ENCODE measurements at regions of chr11 and their contacts with region 1.

Region 1: DNA sequence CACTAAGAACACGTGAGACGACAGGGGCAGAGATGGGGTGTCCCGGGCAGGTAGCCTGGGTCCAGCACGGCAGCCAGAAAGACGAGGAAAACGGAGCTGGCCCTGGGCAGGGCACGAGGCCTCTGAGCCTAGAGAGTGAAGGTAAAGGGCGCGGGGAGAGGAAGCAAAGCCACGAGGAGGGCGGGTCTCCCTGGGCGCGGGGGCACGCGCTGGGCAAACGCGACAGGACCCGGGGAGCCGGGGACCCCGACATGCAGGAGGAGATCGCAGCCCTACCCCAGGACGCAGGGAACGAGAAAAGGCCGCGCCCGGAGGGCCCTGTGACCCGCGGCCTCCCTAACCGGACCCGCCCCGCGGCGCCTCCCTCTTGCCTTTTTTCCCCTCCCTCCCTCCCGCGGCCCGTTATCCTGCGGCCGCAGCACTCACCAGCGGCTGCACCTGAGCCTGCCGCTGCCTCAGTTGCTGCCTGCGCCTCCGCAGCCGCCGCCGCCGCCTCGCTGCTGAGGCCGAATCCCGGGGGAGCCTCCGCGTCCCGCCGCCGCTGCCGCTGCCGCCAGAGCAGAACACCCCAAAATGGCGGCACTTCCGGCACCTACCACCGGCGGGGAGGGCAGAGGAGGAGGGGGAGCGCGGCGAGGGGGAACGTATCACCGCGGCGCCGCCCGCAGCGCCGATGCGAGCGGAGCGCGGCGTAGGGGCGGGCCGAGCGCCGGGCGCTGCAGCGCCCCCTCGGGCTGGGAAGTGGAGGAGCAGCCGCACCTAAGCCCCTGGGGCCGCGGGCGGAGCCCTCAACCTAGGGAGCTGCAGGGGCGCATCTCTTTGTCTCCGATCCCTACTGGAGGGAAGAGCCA is at the start of gene CELF1:
- DNase-seq: peak; percentile 95
- H3K4me3 ChIP-seq: peak within 1 kb of the TSS; percentile 63 to 88
- H3K27ac ChIP-seq: peak within 1 kb of the TSS; percentile 84 to 87
- H3K4me1 ChIP-seq: peaks cover 3 to 24% of the 10 kb centered on the region in 2 experiments; a peak in 2 of 4 replicates
- H3K27me3 ChIP-seq: no peaks in the 10 kb centered on the region
- CTCF ChIP-seq: peak; percentile 81
- EP300 ChIP-seq: 0 out of 4 replicates have a peak, but pooled peaks of 1 of the 2 experiments have one; percentile 3
- RAD21 ChIP-seq: peak; percentile 24; the same call in 1 of the 2 replicates
- polyA plus RNA-seq, gene CELF1: 47.5 and 69.3 TPM in 2 replicates

Region 2: DNA sequence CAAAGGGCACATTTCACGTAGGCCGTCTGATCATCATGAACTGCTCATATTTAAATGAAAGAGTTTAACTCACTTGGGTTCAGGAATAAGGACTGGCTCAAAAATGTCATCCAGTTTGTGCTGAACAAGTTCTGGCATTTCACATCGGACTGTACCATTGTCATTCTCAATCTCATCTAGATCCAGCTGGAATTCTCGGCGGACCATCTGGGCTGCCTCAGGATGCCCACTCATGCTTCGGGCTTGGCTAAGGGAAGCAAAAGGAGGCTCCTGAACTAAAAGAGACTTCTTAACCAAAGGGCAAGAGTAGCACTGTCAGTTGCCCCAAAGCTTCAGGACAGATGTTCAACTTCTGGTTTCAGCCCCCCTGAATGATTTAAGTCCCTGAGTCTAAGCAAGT is 793.6 kb before region 1 on chr11:
- CTCF ChIA-PET with region 1: no interaction called
- POLR2A ChIA-PET with region 1: no interaction called
- DNase-seq: no peak
- H3K4me3 ChIP-seq: no peak overlapping the region
- H3K27ac ChIP-seq: no peak overlapping the region
- H3K4me1 ChIP-seq: no peaks in the 10 kb centered on the region
- H3K27me3 ChIP-seq: no peaks in the 10 kb centered on the region
- CTCF ChIP-seq: no peak
- EP300 ChIP-seq: no peak
- RAD21 ChIP-seq: no peak

Region 3: DNA sequence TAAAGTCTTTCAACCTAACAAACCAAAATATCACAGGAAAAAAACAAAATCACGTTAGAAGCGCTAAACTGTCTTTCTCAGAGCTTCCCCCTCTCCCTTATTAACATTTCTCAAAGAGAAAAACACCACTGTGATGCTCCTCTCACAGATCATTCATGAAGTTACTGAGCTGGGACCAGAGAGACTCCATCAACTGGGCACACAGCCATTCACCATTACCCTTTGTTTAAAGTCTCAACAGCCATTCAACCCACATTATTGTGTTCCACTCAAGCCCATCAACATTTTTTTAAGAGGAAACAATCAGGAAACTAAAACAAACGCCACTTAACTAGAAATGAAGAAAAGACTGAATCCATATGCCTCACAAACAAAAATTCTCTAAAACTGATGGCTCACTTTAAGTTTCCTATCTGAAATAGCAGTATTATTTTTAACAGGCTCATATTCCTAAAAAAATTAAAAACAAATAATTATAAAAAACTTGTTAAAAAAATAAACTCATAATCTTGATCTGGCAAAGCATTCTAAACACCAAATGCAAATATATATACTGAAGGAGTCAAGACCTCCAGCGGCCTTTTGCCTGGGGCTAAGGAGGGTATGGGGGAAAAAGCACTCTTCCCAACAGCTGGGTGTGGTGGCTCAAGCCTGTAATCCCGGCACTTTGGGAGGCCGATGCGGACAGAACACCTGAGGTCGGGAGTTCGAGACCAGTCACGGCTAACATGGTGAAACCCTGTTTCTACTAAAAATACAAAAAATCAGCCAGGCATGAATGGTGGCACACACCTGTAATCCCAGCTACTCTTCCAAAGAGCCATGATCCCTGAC is 13.8 kb before region 1 on chr11:
- CTCF ChIA-PET with region 1: interaction called, 10 read pairs
- POLR2A ChIA-PET with region 1: interaction called, 3 read pairs
- DNase-seq: no peak
- H3K4me3 ChIP-seq: no peak overlapping the region
- H3K27ac ChIP-seq: peak overlapping the region in 1 of 2 experiments; percentile 70; a peak in 2 of 4 replicates
- H3K4me1 ChIP-seq: peaks cover 0 to 66% of the 10 kb centered on the region in 2 experiments; a peak in 3 of 4 replicates
- H3K27me3 ChIP-seq: no peaks in the 10 kb centered on the region
- CTCF ChIP-seq: no peak
- EP300 ChIP-seq: no peak
- RAD21 ChIP-seq: no peak

Region 4: GRCh38 chr11:47565340-47566148 is 12.8 kb after region 1 on chr11 and contains the start of gene PTPMT1:
- CTCF ChIA-PET with region 1: interaction called, 21 read pairs
- POLR2A ChIA-PET with region 1: interaction called, 8 read pairs
- DNase-seq: peak; percentile 94
- H3K4me3 ChIP-seq: peak within 1 kb of the TSS; percentile 68 to 97
- H3K27ac ChIP-seq: peak within 1 kb of the TSS; percentile 38 to 40; a peak in 3 of 4 replicates
- H3K4me1 ChIP-seq: peaks cover 0 to 3% of the 10 kb centered on the region in 2 experiments; a peak in 3 of 4 replicates
- H3K27me3 ChIP-seq: no peaks in the 10 kb centered on the region
- CTCF ChIP-seq: no peak
- EP300 ChIP-seq: no peak
- RAD21 ChIP-seq: no peak
- polyA plus RNA-seq, gene PTPMT1: 64.4 and 69.0 TPM in 2 replicates

Region 5: GRCh38 chr11:47578524-47579460 is 26.0 kb after region 1 on chr11 and contains the starts of genes KBTBD4 and NDUFS3:
- CTCF ChIA-PET with region 1: interaction called, 14 read pairs
- POLR2A ChIA-PET with region 1: no interaction called
- DNase-seq: peak; percentile 94
- H3K4me3 ChIP-seq: peak within 1 kb of the TSS; percentile 90 to 98
- H3K27ac ChIP-seq: peak within 1 kb of the TSS; percentile 69 to 94
- H3K4me1 ChIP-seq: peaks cover 13 to 21% of the 10 kb centered on the region in 2 experiments; a peak in 3 of 4 replicates
- H3K27me3 ChIP-seq: no peaks in the 10 kb centered on the region
- CTCF ChIP-seq: no peak
- EP300 ChIP-seq: no peak; a peak in 1 of 4 replicates
- RAD21 ChIP-seq: no peak
- polyA plus RNA-seq, gene KBTBD4: 16.8 and 24.6 TPM in 2 replicates
- polyA plus RNA-seq, gene NDUFS3: 150 and 163 TPM in 2 replicates

Region 6: DNA sequence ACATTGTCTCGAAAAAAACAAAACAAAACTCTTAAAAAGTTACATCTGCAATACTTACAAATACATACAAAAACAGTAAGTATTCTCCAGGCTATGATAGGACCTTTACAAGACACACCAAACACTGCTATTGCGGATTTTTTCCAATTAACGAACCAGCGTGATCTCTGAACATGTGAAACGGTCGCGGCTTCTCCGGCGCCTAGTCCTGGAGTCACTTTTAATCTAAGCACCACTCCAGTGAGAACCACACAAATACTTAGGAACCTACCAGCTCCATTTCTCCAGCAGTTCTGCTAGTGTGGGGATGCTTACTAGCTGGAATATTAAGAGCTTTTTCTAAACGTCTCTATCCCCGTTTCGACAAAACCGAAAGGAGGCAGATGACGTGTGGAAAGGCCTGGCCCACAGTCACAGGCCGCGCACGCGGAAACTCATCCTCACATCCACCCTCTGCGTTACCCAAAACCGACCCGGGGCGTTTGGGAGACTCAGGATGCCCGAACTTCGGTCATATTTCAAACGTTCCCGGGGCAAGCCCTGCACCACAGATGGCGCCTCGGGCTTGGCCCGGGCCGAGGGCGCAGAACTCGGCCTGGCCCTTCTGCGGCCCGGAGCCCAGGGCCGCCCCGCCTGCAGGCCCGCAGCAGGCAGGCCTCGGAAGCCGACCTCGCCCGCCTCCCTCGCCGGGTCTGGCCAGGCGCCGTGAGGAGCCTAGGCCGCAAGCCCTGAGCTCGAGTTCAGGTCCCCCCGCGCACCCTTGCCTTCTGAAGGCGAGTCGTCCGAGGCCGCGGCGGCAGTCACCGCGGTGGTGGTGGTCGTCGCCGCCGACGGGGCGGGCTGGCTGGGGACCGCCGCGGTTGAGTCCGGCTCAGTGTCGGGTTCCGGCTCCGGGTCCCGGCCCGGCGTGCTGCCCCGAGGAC is 213.8 kb after region 1 on chr11:
- CTCF ChIA-PET with region 1: no interaction called
- POLR2A ChIA-PET with region 1: no interaction called
- DNase-seq: no peak
- H3K4me3 ChIP-seq: peak overlapping the region; percentile 68 to 81
- H3K27ac ChIP-seq: peak overlapping the region; percentile 84 to 94
- H3K4me1 ChIP-seq: peaks cover 5 to 17% of the 10 kb centered on the region in 2 experiments; a peak in 3 of 4 replicates
- H3K27me3 ChIP-seq: no peaks in the 10 kb centered on the region
- CTCF ChIP-seq: no peak
- EP300 ChIP-seq: no peak
- RAD21 ChIP-seq: no peak

Measured in SK-N-SH (cell line).